Activated T-helper 2 cell treated with anti-CD3 and anti-CD28 coated beads, Interferon-gamma antibody, Interleukin-2, Interleukin-4, amounts not matched to agents 10 μg/mL and 5 μg/mL and 100 μg/mL, durations not matched to agents 14 hours and 24 hours and 36 hours (primary cell): ENCODE measurements at regions of chr15 and their contacts with region 1.

Region 1: DNA sequence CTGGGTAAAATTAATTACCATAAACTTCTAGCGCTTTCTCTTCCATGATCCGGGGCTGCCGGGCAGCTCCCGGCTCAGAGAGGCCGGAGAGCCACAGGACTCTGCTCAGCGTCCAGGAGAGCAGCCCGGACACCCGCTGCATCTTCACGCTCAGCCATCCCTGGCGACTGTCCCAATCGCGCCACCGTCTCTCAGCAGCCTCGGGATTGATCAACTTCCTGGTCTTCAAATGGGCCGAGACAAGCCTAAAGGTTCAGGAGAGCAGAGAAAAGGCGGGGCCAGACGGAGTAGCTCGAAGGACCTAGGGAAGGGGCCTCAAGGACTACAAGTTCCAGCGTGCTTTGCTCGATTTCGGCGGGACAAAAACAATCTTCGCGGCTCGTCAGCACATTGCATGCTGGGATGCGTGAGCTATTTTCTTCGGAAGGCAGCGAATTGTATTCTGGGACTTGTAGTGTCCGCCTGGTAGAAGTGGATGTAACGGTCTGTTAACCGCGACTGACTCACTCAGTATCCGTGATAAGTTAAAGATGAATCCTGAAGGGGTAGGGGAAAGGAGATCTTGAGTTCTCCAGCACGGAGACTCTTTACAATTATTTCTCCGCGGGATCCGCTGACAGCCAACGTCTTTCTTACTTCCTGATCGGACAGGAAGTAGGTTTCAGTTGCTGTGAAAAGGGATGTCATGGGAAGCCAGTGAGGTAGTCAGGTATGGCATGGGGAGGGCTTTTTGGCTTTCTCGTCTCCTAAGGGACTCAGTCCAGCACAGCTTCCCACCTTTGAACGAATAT is at the start of gene CIAO2A:
- DNase-seq: peak; percentile 93
- H3K4me3 Mint-ChIP-seq: peak within 1 kb of the TSS; percentile 94
- H3K27ac Mint-ChIP-seq: peak within 1 kb of the TSS; percentile 92
- H3K4me1 Mint-ChIP-seq: peaks cover 50% of the 10 kb centered on the region
- H3K27me3 Mint-ChIP-seq: no peaks in the 10 kb centered on the region
- total RNA-seq, gene CIAO2A: 76.1 and 78.3 TPM in 2 replicates

Region 2: DNA sequence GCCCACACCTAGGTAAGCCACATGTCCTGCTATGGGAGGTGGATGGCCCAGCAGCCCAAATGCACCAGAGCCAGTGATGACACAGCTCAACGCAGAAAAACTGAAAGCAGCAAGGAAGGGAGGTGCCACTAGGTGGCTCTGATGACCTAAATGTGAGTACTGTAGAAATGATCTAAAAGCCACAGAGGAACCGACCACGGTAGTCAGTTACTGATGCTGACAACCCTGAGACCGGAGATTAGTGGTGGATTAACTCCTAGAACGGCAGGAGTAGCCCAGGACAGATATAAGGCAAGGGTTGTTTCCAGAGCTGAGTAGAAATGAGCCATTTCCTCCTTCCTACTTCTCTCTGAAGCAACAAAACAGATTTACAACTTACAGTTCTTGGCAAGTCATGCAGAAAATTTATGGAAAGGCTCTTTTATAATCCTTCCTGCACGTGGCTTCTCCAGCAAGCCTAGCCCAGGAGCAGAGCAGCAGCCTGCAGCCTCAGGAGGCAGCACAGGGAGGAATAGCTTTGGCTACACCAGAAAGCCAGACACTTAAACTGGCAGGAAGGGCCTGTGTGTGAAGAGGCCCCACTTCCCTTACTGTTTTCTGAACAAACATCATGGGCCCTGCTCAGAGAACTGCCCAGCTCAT is 483.5 kb before region 1 on chr15:
- intact Hi-C with region 1: loop called (anchors 5 kb)
- DNase-seq: peak; percentile 74
- H3K4me3 Mint-ChIP-seq: peak overlapping the region; percentile 0
- H3K27ac Mint-ChIP-seq: peak overlapping the region; percentile 92
- H3K4me1 Mint-ChIP-seq: peaks cover 25% of the 10 kb centered on the region
- H3K27me3 Mint-ChIP-seq: no peaks in the 10 kb centered on the region

Region 3: DNA sequence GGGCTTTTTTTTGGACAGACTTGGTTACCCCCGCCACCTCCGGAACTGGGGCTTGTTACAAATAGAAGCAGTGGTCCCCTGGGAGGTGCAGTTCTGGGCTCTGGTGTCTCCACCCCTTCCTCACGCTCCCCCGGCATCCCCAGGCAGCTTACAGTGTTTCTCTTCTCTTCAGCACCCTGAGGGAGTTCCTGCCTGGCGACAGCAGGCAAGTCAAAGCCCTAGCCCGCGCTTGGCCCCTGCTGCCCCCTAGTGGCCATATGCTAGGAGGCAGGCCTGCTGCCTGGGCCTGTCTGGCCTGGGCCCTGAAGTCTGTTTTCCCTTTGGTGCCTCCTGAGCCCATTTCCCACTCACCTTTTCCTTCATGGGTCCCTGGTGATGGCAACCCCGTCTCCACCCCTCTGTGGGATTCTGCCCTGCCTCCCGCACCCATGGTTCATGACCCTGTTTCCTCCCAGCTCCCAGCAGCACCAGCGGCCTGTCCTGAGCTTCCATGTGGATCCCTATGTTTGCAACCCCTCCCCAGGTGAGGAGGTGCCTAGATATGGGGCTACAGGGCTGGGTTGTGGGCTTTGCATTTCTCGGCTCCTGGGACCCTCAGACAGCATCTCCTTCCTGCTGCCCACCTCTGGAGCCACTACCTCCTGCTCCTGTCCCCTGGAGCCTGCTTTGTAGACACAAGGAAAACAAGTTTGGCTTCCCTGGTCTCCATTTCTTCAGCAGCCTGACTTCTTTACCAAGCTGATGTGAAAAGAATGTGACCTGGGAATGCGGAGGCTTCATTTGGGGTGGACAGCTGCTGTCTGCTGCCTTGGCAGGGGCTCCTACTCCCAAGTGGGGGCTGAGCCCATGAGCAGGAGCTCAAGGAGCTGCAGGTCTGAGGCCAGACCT is 59.9 kb after region 1 on chr15:
- intact Hi-C with region 1: loop called (anchors 2 kb)
- DNase-seq: peak; percentile 85
- H3K4me3 Mint-ChIP-seq: peak overlapping the region; percentile 67
- H3K27ac Mint-ChIP-seq: no peak overlapping the region
- H3K4me1 Mint-ChIP-seq: peaks cover 25% of the 10 kb centered on the region
- H3K27me3 Mint-ChIP-seq: peaks cover 7% of the 10 kb centered on the region

Region 4: GRCh38 chr15:64387562-64388168 is 293.8 kb after region 1 on chr15 and contains the start of gene TRIP4:
- intact Hi-C with region 1: loop called (anchors 10 kb)
- DNase-seq: peak; percentile 96
- H3K4me3 Mint-ChIP-seq: peak within 1 kb of the TSS; percentile 100
- H3K27ac Mint-ChIP-seq: peak within 1 kb of the TSS; percentile 93
- H3K4me1 Mint-ChIP-seq: peaks cover 14% of the 10 kb centered on the region
- H3K27me3 Mint-ChIP-seq: no peaks in the 10 kb centered on the region
- total RNA-seq, gene TRIP4: 17.9 and 20.7 TPM in 2 replicates